ENCODE measurements at regions of chr12 and their contacts with region 1.

Region 1: GRCh38 chr12:100554608-100555077 is 18.8 kb upstream of the GAS2L3 start:
- DNase-seq: no peak
- H3K4me3 ChIP-seq: no peak overlapping the region
- H3K27ac ChIP-seq: no peak overlapping the region
- H3K27me3 ChIP-seq: no peaks in the 10 kb centered on the region
- CTCF ChIP-seq: peak; percentile 87 to 99 (median 94)

Region 2: GRCh38 chr12:100101000-100101399 is 453.6 kb before region 1 on chr12:
- intact Hi-C with region 1: no loop called
- DNase-seq: no peak
- H3K4me3 ChIP-seq: no peak overlapping the region
- H3K27ac ChIP-seq: no peak overlapping the region
- H3K27me3 ChIP-seq: no peaks in the 10 kb centered on the region
- CTCF ChIP-seq: no peak

Region 3: DNA sequence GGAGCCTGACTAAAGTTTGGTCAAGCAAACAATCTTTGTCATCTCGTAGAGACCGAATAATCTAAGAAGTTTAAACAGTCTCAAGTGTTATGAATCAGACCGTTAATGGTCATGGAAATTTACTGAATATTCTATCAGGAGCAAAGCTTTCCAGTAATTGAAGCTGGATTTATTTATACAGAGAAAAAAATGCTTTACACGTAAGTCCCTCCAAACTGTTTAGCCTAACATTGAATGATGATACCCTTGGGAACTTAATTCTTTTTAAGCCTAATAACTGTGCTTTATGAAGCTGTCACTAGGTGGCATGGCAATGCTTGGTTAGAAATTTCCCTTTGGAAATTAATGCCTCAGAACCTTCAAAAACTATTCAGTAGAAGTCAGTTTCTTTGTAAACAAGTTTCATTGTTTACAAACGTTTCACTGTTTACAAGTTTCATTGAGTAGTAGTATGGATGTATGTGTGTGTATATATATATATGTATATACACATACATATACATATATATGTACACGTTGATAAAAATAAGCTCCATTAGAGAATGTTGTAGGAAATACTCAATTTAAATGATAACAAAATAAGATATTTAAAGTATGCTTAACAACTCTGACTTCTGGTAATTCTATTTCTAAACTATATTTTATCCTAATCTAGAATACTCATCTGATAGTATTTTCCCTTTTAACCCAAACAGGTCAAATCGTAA is 319.9 kb before region 1 on chr12:
- intact Hi-C with region 1: loop called (anchors 2 to 10 kb)
- DNase-seq: no peak
- H3K4me3 ChIP-seq: no peak overlapping the region
- H3K27ac ChIP-seq: no peak overlapping the region
- H3K27me3 ChIP-seq: no peaks in the 10 kb centered on the region
- CTCF ChIP-seq: peak; percentile 47 to 83 (median 70)

Region 4: GRCh38 chr12:100348657-100349454 is 205.8 kb before region 1 on chr12:
- intact Hi-C with region 1: loop called (anchors 2 to 10 kb)
- DNase-seq: no peak
- H3K4me3 ChIP-seq: no peak overlapping the region
- H3K27ac ChIP-seq: no peak overlapping the region
- H3K27me3 ChIP-seq: peaks cover 0 to 6% (median 0%) of the 10 kb centered on the region in 45 donors
- CTCF ChIP-seq: peak in 54 of 56 donors; percentile 19 to 85 (median 58)

Measured in dorsolateral prefrontal cortex (tissue), 120 donors.